ENCODE measurements at regions of chr20 and their contacts with region 1.

Region 1: DNA sequence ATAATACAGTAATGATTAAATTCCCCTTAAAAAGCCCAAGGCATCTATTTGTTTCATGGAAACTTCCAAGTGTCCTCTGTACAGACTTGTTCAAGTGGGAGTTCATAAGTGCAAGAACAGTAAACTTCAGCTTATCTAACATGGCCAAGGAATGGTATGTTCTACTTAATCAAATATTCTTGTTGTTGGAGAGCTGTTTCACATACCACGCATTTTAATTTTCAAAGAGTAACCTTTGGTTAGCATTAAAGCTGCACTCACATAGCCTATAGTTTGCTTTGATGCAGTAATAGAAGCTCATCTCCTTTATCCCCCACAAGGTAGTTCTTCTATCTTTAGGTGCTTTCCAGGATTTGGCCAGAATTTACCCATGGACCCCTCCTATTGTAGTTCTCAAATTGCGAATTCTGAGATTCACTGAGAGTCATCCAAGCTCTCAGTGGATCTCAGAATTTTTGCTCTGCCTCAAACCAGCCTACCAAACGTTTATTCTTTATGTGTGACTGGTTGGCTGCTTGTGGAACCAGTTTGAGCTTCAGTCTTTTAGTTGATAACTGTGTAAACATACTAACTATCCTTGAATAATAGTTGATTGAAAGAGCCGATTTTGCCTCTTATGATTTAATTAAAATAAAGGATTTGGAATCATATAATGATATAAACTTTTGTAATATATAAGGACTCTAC is 668.0 kb upstream of the FLRT3 start:
- DNase-seq: no peak
- ATAC-seq: peak in 2 of 8 donors; percentile 29 to 82
- H3K4me3 ChIP-seq: no peak overlapping the region
- H3K27ac ChIP-seq: no peak overlapping the region
- H3K4me1 ChIP-seq: peaks cover 0 to 8% (median 0%) of the 10 kb centered on the region in 9 donors
- H3K27me3 ChIP-seq: no peaks in the 10 kb centered on the region
- CTCF ChIP-seq: no peak

Region 2: DNA sequence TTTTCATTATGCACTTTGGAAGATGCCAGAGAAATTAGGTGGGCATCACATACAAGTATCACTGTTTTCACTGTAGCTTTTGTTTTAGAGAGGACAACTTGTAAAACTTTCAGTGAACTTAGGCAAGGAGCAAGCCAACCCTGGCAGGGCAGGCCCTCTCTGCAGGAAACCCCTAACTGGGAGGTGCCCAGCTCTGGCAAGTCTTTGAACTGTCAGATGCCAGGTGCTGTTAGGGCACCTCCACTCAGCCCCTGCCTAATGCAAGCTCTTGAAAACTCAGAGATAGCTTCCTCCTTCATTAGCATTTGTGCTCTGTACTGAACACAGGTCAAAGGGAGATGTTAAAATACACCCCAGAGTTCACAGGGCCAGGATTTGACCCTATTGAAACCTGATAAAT is 106.2 kb after region 1 on chr20:
- intact Hi-C with region 1: no loop called
- DNase-seq: no peak
- ATAC-seq: no peak
- H3K4me3 ChIP-seq: no peak overlapping the region
- H3K27ac ChIP-seq: no peak overlapping the region
- H3K4me1 ChIP-seq: no peaks in the 10 kb centered on the region
- H3K27me3 ChIP-seq: no peaks in the 10 kb centered on the region
- CTCF ChIP-seq: no peak

Region 3: GRCh38 chr20:15302075-15302474 is 296.6 kb after region 1 on chr20:
- intact Hi-C with region 1: loop called in 1 of 10 experiments (anchors 5 kb)
- DNase-seq: no peak
- ATAC-seq: no peak
- H3K4me3 ChIP-seq: no peak overlapping the region
- H3K27ac ChIP-seq: no peak overlapping the region
- H3K4me1 ChIP-seq: no peaks in the 10 kb centered on the region
- H3K27me3 ChIP-seq: no peaks in the 10 kb centered on the region
- CTCF ChIP-seq: no peak